ENCODE measurements at regions of chr2 and their contacts with region 1.

Region 1: DNA sequence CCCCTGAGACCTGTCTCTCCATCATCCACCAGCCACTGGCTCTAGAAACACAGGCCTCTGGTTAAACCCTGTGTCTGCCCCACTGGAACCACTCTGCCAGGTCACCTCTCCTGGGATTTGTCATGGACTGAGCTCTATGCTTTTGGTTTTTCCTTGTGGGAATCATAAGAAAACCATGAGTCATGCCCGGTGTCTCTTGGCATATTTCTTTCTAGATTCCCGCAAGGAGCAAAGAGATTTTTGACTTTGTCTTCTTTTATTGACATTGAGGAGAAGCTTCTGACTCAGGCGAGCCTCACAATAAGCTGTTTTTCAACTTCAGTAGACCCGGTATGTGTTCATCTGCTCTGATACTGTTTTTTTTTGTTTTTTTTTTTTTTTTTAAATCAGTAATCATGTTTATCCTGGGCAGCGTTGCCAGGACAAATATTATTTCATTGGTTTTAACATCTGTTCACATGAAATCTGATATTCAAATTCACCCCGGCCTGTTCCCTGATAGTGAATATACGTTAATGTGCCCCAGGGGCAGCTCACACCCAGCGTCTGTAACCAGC is 207.1 kb downstream of the ACKR3 start:
- DNase-seq: no peak
- ATAC-seq: 0 out of 2 replicates have a peak, but pooled peaks have one; percentile 34
- H3K4me3 ChIP-seq: no peak overlapping the region
- H3K27ac ChIP-seq: no peak overlapping the region
- H3K4me1 ChIP-seq: no peaks in the 10 kb centered on the region
- H3K27me3 ChIP-seq: peaks cover 26% of the 10 kb centered on the region; the same call in 1 of the 2 replicates
- CTCF ChIP-seq: no peak
- POLR2A ChIP-seq: no peak
- RAD21 ChIP-seq: no peak

Region 2: GRCh38 chr2:236805800-236806531 is 29.2 kb after region 1 on chr2:
- CTCF ChIA-PET with region 1: no interaction called
- POLR2A ChIA-PET with region 1: no interaction called
- RAD21 ChIA-PET with region 1: no interaction called
- intact Hi-C with region 1: loop called (anchors 1 kb)
- DNase-seq: no peak
- ATAC-seq: no peak
- H3K4me3 ChIP-seq: no peak overlapping the region
- H3K27ac ChIP-seq: no peak overlapping the region
- H3K4me1 ChIP-seq: no peaks in the 10 kb centered on the region
- H3K27me3 ChIP-seq: peaks cover 18% of the 10 kb centered on the region
- CTCF ChIP-seq: no peak
- POLR2A ChIP-seq: no peak
- RAD21 ChIP-seq: no peak